Naive thymus-derived CD4-positive, alpha-beta T cell (primary cell): ENCODE measurements at regions of chr14 and their contacts with region 1.

Region 1: GRCh38 chr14:77616454-77617229 is at the start of gene SPTLC2:
- DNase-seq: peak; percentile 78 to 99 (median 96)
- ATAC-seq: peak; percentile 98
- H3K4me3 ChIP-seq: peak within 1 kb of the TSS; percentile 55
- H3K4me3 Mint-ChIP-seq: peak within 1 kb of the TSS; percentile 85 to 97 (median 92)
- H3K27ac ChIP-seq: peak within 1 kb of the TSS; percentile 69
- H3K27ac Mint-ChIP-seq: peak within 1 kb of the TSS; percentile 45 to 91 (median 86)
- H3K4me1 ChIP-seq: peaks cover 4 to 5% of the 10 kb centered on the region in 2 donors
- H3K4me1 Mint-ChIP-seq: peaks cover 29 to 52% (median 40%) of the 10 kb centered on the region in 7 donors
- H3K27me3 ChIP-seq: no peaks in the 10 kb centered on the region
- H3K27me3 Mint-ChIP-seq: peaks cover 0 to 4% (median 0%) of the 10 kb centered on the region in 5 donors
- total RNA-seq, gene SPTLC2: 19.0 to 58.1 (median 25.7) TPM

Region 2: GRCh38 chr14:76962303-76962660 is 654.4 kb before region 1 on chr14:
- CTCF ChIA-PET with region 1: no interaction called
- POLR2A ChIA-PET with region 1: no interaction called
- intact Hi-C with region 1: loop called in 1 of 2 experiments (anchors 1 kb)
- DNase-seq: no peak
- ATAC-seq: no peak
- H3K4me3 ChIP-seq: peak overlapping the region; percentile 82
- H3K4me3 Mint-ChIP-seq: peak overlapping the region; percentile 74 to 86 (median 84)
- H3K27ac ChIP-seq: peak overlapping the region; percentile 87
- H3K27ac Mint-ChIP-seq: peak overlapping the region; percentile 87 to 99 (median 91)
- H3K4me1 ChIP-seq: peaks cover 39 to 59% of the 10 kb centered on the region in 2 donors
- H3K4me1 Mint-ChIP-seq: peaks cover 41 to 89% (median 79%) of the 10 kb centered on the region in 7 donors
- H3K27me3 ChIP-seq: no peaks in the 10 kb centered on the region
- H3K27me3 Mint-ChIP-seq: peaks cover 0 to 8% (median 0%) of the 10 kb centered on the region in 5 donors

Region 3: DNA sequence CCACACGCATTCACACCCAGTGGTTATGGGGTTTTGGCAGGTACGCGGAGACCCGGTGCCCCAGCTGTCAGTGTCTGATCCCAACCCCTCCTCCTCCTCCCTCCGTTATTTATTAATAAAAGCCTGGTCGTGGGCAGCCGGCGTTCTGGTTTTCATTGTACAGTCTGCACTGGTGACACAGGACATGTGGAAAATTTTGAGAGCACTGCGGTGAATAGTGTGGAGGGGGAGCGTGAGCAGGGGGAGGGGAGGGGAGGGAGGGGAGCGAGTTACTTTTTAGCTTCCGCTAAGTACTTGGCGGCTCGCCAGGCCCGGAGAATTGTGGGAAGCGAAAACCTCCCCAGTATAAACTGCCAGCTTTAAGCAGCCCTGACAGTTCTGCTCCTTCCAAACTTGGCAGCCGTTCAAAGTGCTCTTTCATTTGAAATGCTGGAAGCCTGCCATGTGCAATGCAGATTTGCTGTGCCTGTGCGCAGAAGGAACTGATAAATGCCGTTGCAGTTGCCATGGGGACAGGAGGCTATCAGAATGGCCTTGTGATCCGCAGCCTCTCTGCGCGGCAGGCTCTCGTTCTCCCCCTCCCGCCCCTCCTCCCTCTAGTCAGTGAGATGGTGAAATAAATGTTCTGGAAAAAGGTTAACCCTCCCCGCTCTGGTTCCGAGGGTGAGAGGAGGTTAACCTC is 576.4 kb before region 1 on chr14:
- CTCF ChIA-PET with region 1: no interaction called
- POLR2A ChIA-PET with region 1: no interaction called
- intact Hi-C with region 1: loop called (anchors 2 to 10 kb)
- DNase-seq: peak; percentile 86 to 99 (median 99)
- ATAC-seq: peak; percentile 87
- H3K4me3 ChIP-seq: peak overlapping the region; percentile 78
- H3K4me3 Mint-ChIP-seq: peak overlapping the region; percentile 76 to 97 (median 87)
- H3K27ac ChIP-seq: peak overlapping the region; percentile 97
- H3K27ac Mint-ChIP-seq: peak overlapping the region; percentile 97 to 100 (median 99)
- H3K4me1 ChIP-seq: peaks cover 57 to 77% of the 10 kb centered on the region in 2 donors
- H3K4me1 Mint-ChIP-seq: peaks cover 50 to 97% (median 89%) of the 10 kb centered on the region in 7 donors
- H3K27me3 ChIP-seq: no peaks in the 10 kb centered on the region
- H3K27me3 Mint-ChIP-seq: no peaks in the 10 kb centered on the region

Region 4: DNA sequence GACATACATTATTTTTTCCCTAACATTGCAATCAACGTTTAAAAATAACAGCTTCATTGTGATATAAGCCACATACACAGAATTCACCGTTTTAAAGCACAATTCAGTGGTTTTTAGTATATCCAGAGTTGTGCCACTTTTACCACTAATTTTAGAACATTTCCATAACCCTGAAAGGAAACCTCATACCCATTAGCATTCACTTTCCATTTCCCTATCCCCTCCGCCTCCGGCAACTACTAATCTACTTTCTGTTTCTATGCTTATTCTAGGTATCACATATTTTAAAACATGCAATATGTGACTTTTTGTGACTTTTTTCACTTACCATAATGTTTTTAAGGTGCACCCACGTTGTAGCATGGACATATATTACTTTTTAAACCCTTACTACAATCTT is 62.4 kb before region 1 on chr14:
- CTCF ChIA-PET with region 1: no interaction called
- POLR2A ChIA-PET with region 1: no interaction called
- intact Hi-C with region 1: loop called in 1 of 2 experiments (anchors 2 kb)
- DNase-seq: no peak
- ATAC-seq: peak; percentile 40
- H3K4me3 ChIP-seq: no peak overlapping the region
- H3K4me3 Mint-ChIP-seq: peak overlapping the region in 1 of 10 donors; percentile 77
- H3K27ac ChIP-seq: no peak overlapping the region
- H3K27ac Mint-ChIP-seq: peak overlapping the region in 4 of 9 donors; percentile 2 to 89 (median 26)
- H3K4me1 ChIP-seq: no peaks in the 10 kb centered on the region
- H3K4me1 Mint-ChIP-seq: peaks cover 0 to 27% (median 6%) of the 10 kb centered on the region in 7 donors
- H3K27me3 ChIP-seq: no peaks in the 10 kb centered on the region
- H3K27me3 Mint-ChIP-seq: no peaks in the 10 kb centered on the region

Region 5: DNA sequence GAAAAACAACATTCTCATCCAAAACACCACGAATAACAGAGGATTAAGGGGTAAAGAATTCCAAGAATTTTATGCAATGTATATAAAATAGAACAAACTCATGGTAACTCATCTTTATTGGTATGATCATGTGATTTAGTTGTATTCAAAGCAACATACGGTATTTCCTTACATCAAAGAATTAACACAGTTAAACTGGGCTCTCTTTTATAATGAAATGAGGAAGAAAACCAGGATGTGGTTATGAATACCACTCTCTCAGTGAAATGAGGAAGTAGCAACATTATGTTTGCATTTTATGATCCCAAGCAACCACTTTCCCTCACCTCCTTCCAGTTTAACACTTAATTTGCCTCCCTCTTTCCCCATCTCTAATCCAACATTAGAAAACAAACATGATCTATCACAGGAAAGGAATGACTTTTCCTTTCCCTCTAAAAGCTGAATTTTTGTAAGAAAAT is 23.1 kb before region 1 on chr14:
- CTCF ChIA-PET with region 1: no interaction called
- POLR2A ChIA-PET with region 1: interaction called, 9 read pairs
- intact Hi-C with region 1: loop called (anchors 1 to 2 kb)
- DNase-seq: peak in 6 of 9 donors; percentile 30 to 71 (median 68)
- ATAC-seq: peak; percentile 86
- H3K4me3 ChIP-seq: peak overlapping the region; percentile 15
- H3K4me3 Mint-ChIP-seq: peak overlapping the region; percentile 61 to 89 (median 80)
- H3K27ac ChIP-seq: peak overlapping the region; percentile 56
- H3K27ac Mint-ChIP-seq: peak overlapping the region; percentile 83 to 93 (median 89)
- H3K4me1 ChIP-seq: peaks cover 13 to 43% of the 10 kb centered on the region in 2 donors
- H3K4me1 Mint-ChIP-seq: peaks cover 29 to 72% (median 62%) of the 10 kb centered on the region in 7 donors
- H3K27me3 ChIP-seq: no peaks in the 10 kb centered on the region
- H3K27me3 Mint-ChIP-seq: no peaks in the 10 kb centered on the region

Region 6: GRCh38 chr14:77707724-77708408 is 91.2 kb after region 1 on chr14 and contains the starts of genes ALKBH1 and SLIRP:
- CTCF ChIA-PET with region 1: no interaction called
- POLR2A ChIA-PET with region 1: interaction called, 4 read pairs
- intact Hi-C with region 1: loop called (anchors 1 kb)
- DNase-seq: peak; percentile 73 to 91 (median 87)
- ATAC-seq: peak; percentile 98
- H3K4me3 ChIP-seq: peak within 1 kb of the TSS; percentile 88
- H3K4me3 Mint-ChIP-seq: peak within 1 kb of the TSS; percentile 86 to 98 (median 94)
- H3K27ac ChIP-seq: peak within 1 kb of the TSS; percentile 79
- H3K27ac Mint-ChIP-seq: peak within 1 kb of the TSS; percentile 91 to 99 (median 94)
- H3K4me1 ChIP-seq: peaks cover 22 to 24% of the 10 kb centered on the region in 2 donors
- H3K4me1 Mint-ChIP-seq: peaks cover 26 to 58% (median 44%) of the 10 kb centered on the region in 7 donors
- H3K27me3 ChIP-seq: no peaks in the 10 kb centered on the region
- H3K27me3 Mint-ChIP-seq: no peaks in the 10 kb centered on the region
- total RNA-seq, gene ALKBH1: 10.2 to 20.3 (median 14.1) TPM
- total RNA-seq, gene SLIRP: 35.9 to 66.6 (median 45.5) TPM

Region 7: GRCh38 chr14:77799863-77800730 is 183.5 kb after region 1 on chr14 and contains the start of gene ADCK1:
- CTCF ChIA-PET with region 1: no interaction called
- POLR2A ChIA-PET with region 1: no interaction called
- intact Hi-C with region 1: loop called in 1 of 2 experiments (anchors 1 kb)
- DNase-seq: peak; percentile 74 to 87 (median 84)
- ATAC-seq: peak; percentile 94
- H3K4me3 ChIP-seq: peak within 1 kb of the TSS; percentile 71
- H3K4me3 Mint-ChIP-seq: peak within 1 kb of the TSS; percentile 83 to 89 (median 87)
- H3K27ac ChIP-seq: peak within 1 kb of the TSS; percentile 81
- H3K27ac Mint-ChIP-seq: peak within 1 kb of the TSS; percentile 34 to 92 (median 78)
- H3K4me1 ChIP-seq: no peaks in the 10 kb centered on the region
- H3K4me1 Mint-ChIP-seq: peaks cover 0 to 17% (median 6%) of the 10 kb centered on the region in 7 donors
- H3K27me3 ChIP-seq: no peaks in the 10 kb centered on the region
- H3K27me3 Mint-ChIP-seq: no peaks in the 10 kb centered on the region
- total RNA-seq, gene ADCK1: 4.5 to 10.6 (median 10.3) TPM